Activated CD8-positive, alpha-beta memory T cell treated with anti-CD3 and anti-CD28 coated beads, Interleukin-2, amount 10 ng/mL, durations not matched to agents 7 days and 5 days (primary cell): ENCODE measurements at regions of chr19 and their contacts with region 1.

Region 1: GRCh38 chr19:45798995-45799517 is 6.4 kb upstream of the DMWD start:
- DNase-seq: peak; percentile 64
- ATAC-seq: peak; percentile 82
- H3K4me3 Mint-ChIP-seq: no peak overlapping the region
- H3K27ac Mint-ChIP-seq: no peak overlapping the region
- H3K4me1 Mint-ChIP-seq: peaks cover 6% of the 10 kb centered on the region
- H3K27me3 Mint-ChIP-seq: peaks cover 42% of the 10 kb centered on the region

Region 2: GRCh38 chr19:45779231-45780145 is 19.6 kb before region 1 on chr19:
- CTCF ChIA-PET with region 1: interaction called, 338 read pairs
- DNase-seq: peak; percentile 96
- ATAC-seq: peak; percentile 97
- H3K4me3 Mint-ChIP-seq: peak overlapping the region; percentile 64
- H3K27ac Mint-ChIP-seq: no peak overlapping the region
- H3K4me1 Mint-ChIP-seq: peaks cover 13% of the 10 kb centered on the region
- H3K27me3 Mint-ChIP-seq: peaks cover 10% of the 10 kb centered on the region

Region 3: DNA sequence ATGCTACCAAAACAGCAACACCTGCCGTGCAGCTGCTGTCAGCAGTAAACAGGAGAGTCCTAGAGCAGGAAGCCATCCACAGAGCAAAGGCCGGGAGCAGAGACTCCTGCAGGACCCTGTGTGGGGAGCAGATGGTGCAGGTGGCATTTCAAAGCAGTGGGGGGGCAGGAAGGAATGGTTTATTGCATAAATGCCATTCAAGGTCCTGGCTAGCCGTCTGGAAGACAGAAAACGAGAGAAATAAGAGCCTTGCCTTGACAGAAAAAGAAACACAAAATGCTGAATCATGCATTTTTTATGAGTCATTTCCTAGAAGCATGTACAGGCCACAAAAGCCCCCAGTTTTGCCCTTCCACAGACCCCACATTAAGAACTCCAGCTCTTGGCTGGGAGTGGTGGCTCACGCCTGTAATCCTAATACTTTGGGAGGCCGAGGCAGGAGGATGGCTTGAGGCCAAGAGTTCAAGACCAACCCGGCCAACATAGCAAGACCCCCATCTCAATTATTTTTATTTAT is 10.6 kb after region 1 on chr19:
- CTCF ChIA-PET with region 1: interaction called, 21 read pairs
- DNase-seq: no peak
- ATAC-seq: peak; percentile 59
- H3K4me3 Mint-ChIP-seq: peak overlapping the region; percentile 26
- H3K27ac Mint-ChIP-seq: peak overlapping the region; percentile 88
- H3K4me1 Mint-ChIP-seq: peaks cover 15% of the 10 kb centered on the region
- H3K27me3 Mint-ChIP-seq: peaks cover 6% of the 10 kb centered on the region